ENCODE measurements at regions of chr11 and their contacts with region 1.

Region 1: DNA sequence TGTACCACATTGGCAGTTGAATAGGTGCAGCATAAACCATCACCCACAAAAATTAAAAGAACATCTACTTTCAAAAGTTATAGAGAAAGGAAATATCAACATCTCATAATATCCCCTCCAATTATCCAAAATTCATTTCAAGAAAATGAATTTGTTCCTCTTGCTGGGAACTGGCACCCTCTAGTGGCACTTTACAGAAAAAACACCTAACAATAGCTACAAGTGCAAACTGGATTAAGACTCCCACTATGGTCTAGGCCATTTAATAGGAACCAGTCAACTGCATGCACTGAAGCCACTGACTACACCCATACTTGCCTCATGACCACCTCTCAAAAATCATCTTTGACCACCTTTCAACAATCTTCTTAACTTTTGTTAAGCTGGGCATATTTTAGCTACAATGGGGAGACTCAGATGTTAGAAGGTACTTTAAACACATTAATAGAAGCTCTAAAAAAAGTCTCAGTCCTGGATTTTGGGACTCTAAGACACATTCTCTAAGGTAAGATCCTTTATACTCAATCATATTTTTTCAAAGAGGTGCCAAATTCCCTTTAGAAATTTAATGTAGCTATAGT is 17.3 kb downstream of the TRAF6 start:
- DNase-seq: peak; percentile 68
- H3K4me3 ChIP-seq: no peak overlapping the region
- H3K27ac ChIP-seq: no peak overlapping the region
- H3K4me1 ChIP-seq: peaks cover 10% of the 10 kb centered on the region
- H3K27me3 ChIP-seq: no peaks in the 10 kb centered on the region
- CTCF ChIP-seq: peak; percentile 63 to 66
- POLR2A ChIP-seq: no peak

Region 2: DNA sequence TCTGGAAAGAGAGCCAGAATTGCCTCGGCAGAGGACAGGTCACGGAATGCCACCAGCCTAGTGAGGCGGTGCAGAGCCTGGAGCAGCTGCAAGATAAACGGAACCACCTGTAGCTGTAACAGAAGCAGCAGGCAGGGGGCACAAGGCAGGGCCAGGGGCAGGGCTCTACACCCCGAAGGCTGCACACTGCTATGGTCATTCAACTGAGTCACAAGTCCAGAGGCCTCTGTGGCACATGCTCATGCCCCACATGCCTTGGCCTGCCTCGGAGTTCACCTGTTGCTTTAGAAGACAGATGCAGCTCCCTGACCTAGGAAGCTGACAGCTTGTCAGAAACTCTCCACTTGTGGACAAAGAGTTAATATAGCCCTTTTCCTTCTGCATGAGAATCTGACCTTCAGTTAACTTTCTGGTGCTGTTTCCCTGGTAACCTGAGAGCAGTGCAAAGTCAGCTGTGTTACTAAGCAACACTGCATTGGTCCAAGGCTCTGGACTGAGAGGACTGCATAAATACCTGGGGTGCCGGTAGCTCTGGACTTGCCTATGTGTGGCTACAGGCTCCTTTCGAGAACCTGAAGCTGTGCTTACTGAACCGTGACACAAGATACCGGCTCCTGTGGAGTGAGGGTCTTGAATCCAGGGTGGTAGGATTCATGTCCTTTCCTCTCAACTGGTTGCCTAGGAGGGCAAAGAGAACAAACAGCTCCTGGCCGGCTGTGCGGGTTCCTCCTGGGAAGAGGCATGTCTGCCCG is 214.1 kb before region 1 on chr11:
- CTCF ChIA-PET with region 1: interaction called, 14 read pairs
- POLR2A ChIA-PET with region 1: no interaction called
- dilution Hi-C with region 1: no loop called
- intact Hi-C with region 1: no loop called
- DNase-seq: no peak
- H3K4me3 ChIP-seq: no peak overlapping the region
- H3K27ac ChIP-seq: no peak overlapping the region
- H3K4me1 ChIP-seq: no peaks in the 10 kb centered on the region
- H3K27me3 ChIP-seq: no peaks in the 10 kb centered on the region
- CTCF ChIP-seq: no peak
- POLR2A ChIP-seq: no peak

Region 3: DNA sequence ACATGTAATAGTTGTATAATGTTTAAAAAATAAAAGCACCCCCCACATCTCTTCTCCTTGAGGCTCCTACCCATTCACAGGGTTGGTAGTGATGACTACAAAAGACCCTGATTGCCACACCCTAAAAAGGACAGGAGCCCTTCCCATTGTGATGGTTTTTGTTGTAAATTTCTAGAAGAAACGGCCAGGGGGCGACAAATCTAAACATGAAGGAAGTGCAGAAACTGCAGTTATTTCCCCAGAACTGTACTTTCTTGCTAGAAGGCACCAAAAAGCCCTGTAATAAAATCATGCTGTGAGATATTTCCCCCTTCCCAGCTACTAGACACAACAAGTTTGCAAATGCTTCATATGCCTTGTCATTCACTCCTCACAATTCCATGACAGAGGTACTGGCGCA is 185.9 kb before region 1 on chr11:
- CTCF ChIA-PET with region 1: interaction called, 10 read pairs
- POLR2A ChIA-PET with region 1: no interaction called
- dilution Hi-C with region 1: no loop called
- intact Hi-C with region 1: loop called (anchors 1 kb)
- DNase-seq: no peak
- H3K4me3 ChIP-seq: no peak overlapping the region
- H3K27ac ChIP-seq: no peak overlapping the region
- H3K4me1 ChIP-seq: no peaks in the 10 kb centered on the region
- H3K27me3 ChIP-seq: peaks cover 0 to 2% of the 10 kb centered on the region in 2 experiments
- CTCF ChIP-seq: peak in 1 of 2 donors; percentile 29
- POLR2A ChIP-seq: no peak

Region 4: GRCh38 chr11:36438126-36438525 is 54.7 kb before region 1 on chr11:
- CTCF ChIA-PET with region 1: no interaction called
- POLR2A ChIA-PET with region 1: no interaction called
- dilution Hi-C with region 1: no loop called
- intact Hi-C with region 1: no loop called
- DNase-seq: no peak
- H3K4me3 ChIP-seq: no peak overlapping the region
- H3K27ac ChIP-seq: no peak overlapping the region
- H3K4me1 ChIP-seq: no peaks in the 10 kb centered on the region
- H3K27me3 ChIP-seq: no peaks in the 10 kb centered on the region
- CTCF ChIP-seq: no peak
- POLR2A ChIP-seq: no peak

Region 5: GRCh38 chr11:36469063-36469462 is 23.8 kb before region 1 on chr11:
- CTCF ChIA-PET with region 1: interaction called, 15 read pairs
- POLR2A ChIA-PET with region 1: no interaction called
- dilution Hi-C with region 1: no loop called
- intact Hi-C with region 1: no loop called
- DNase-seq: no peak
- H3K4me3 ChIP-seq: no peak overlapping the region
- H3K27ac ChIP-seq: no peak overlapping the region
- H3K4me1 ChIP-seq: no peaks in the 10 kb centered on the region
- H3K27me3 ChIP-seq: no peaks in the 10 kb centered on the region
- CTCF ChIP-seq: peak; percentile 7 to 14
- POLR2A ChIP-seq: no peak

Region 6: DNA sequence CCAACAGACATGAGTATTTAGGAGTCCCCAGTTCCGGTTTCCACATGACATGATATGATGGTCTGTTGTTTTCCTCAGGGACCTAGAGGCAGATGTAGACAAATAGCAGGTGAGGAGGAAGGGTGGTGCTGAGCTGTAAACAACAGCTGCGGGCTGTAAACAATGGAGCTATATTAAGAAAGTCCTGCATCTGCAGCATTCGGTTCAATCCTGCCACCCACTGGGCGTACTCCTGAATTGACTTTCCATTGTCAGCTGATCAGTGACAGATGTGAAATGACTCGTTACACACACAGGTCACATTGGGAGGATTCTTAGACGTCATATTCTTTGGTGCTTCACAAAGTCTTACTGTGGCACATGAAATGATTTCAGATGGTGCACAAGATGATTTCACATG is 48.2 kb after region 1 on chr11:
- CTCF ChIA-PET with region 1: interaction called, 34 read pairs
- POLR2A ChIA-PET with region 1: no interaction called
- dilution Hi-C with region 1: no loop called
- intact Hi-C with region 1: no loop called
- DNase-seq: peak; percentile 67
- H3K4me3 ChIP-seq: no peak overlapping the region
- H3K27ac ChIP-seq: no peak overlapping the region
- H3K4me1 ChIP-seq: peaks cover 3% of the 10 kb centered on the region
- H3K27me3 ChIP-seq: peaks cover 4 to 6% of the 10 kb centered on the region in 2 experiments
- CTCF ChIP-seq: peak; percentile 30 to 46
- POLR2A ChIP-seq: no peak

Measured in endothelial cell of umbilical vein (primary cell).